HEK293 (cell line): ENCODE measurements at regions of chr5 and their contacts with region 1.

Region 1: GRCh38 chr5:170633235-170634081 is 129.6 kb downstream of the KCNIP1 start:
- H3K4me3 ChIP-seq: peak overlapping the region; percentile 31
- H3K27ac ChIP-seq: peak overlapping the region; percentile 67
- H3K4me1 ChIP-seq: peaks cover 6% of the 10 kb centered on the region
- CTCF ChIP-seq: no peak

Region 2: GRCh38 chr5:170225326-170226128 is 407.9 kb before region 1 on chr5:
- CTCF ChIA-PET with region 1: interaction called, 15 read pairs
- POLR2A ChIA-PET with region 1: no interaction called
- H3K4me3 ChIP-seq: no peak overlapping the region
- H3K27ac ChIP-seq: no peak overlapping the region
- H3K4me1 ChIP-seq: no peaks in the 10 kb centered on the region
- CTCF ChIP-seq: 0 out of 2 replicates have a peak, but pooled peaks have one; percentile 27

Region 3: DNA sequence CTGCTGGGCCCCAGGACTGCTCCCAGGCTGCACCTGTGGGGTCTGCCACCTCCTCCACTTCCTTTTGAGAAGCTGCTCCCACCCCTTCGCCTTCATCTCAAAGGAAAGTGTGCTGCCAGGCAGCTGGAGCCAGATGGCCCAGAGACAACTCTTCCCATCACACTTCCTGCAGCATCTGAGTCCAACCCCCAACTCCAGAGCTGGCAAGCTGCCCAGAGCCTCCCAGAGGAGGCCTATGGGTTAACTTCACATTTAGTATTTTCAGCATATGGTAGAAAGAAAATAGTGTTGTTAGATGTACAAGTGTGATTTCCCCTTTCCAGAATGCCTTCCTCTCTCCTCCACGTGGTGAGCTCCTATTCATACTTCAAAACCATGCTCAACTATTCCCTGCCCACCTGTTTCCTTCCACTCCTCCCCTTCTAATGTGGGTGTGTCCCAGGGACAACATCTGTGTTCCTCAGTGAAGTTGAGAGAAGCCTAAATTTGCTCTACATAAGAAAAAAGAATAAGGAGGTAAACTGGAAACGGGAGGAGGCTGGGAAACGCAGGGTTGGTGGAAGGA is 205.7 kb before region 1 on chr5:
- CTCF ChIA-PET with region 1: interaction called, 47 read pairs
- POLR2A ChIA-PET with region 1: no interaction called
- H3K4me3 ChIP-seq: no peak overlapping the region
- H3K27ac ChIP-seq: no peak overlapping the region
- H3K4me1 ChIP-seq: 0 out of 2 replicates have a peak, but pooled peaks cover 4% of the 10 kb centered on the region
- CTCF ChIP-seq: no peak

Region 4: DNA sequence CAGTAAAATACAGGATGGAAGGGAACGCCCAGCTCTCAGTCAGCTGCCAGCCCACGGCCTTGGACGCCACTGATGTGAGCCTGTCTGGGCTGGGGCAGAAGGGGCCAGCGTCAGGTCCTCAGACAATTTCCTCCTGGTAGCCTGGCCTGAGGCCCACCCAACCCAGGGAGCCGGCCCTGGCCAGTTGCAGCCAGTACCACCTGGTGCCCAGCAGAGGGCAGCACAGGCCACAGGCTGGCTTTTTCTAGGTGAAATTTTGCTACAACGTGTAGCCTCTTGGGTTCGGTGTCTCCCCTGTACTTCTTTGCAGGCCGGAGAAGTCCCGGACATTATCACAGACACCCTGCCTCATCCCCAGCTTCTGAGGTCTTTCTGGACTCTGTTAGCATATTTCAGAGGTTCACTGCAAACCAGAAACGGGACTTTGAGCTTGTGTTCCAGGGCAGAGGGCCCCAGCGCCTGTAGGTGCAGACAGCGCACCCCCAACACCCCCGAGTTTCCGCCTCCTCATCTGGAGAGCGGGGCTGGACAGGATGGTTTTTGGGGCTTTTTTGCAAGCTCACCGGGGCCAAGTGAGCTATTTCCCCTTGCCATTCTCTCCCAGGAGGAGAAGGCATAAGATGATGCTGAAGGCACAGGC is 198.4 kb before region 1 on chr5:
- CTCF ChIA-PET with region 1: interaction called, 47 read pairs
- POLR2A ChIA-PET with region 1: no interaction called
- H3K4me3 ChIP-seq: no peak overlapping the region
- H3K27ac ChIP-seq: no peak overlapping the region
- H3K4me1 ChIP-seq: no peaks in the 10 kb centered on the region
- CTCF ChIP-seq: peak; percentile 82

Region 5: GRCh38 chr5:170603578-170604565 is 29.6 kb before region 1 on chr5:
- CTCF ChIA-PET with region 1: interaction called, 11 read pairs
- POLR2A ChIA-PET with region 1: interaction called, 4 read pairs
- H3K4me3 ChIP-seq: no peak overlapping the region
- H3K27ac ChIP-seq: no peak overlapping the region
- H3K4me1 ChIP-seq: no peaks in the 10 kb centered on the region
- CTCF ChIP-seq: peak; percentile 67; the same call in 1 of the 2 replicates

Region 6: GRCh38 chr5:170614720-170615119 is 18.7 kb before region 1 on chr5:
- CTCF ChIA-PET with region 1: interaction called, 16 read pairs
- POLR2A ChIA-PET with region 1: no interaction called
- H3K4me3 ChIP-seq: no peak overlapping the region
- H3K27ac ChIP-seq: no peak overlapping the region
- H3K4me1 ChIP-seq: no peaks in the 10 kb centered on the region
- CTCF ChIP-seq: no peak

Region 7: GRCh38 chr5:170791325-170791954 is 158.0 kb after region 1 on chr5:
- CTCF ChIA-PET with region 1: interaction called, 74 read pairs
- POLR2A ChIA-PET with region 1: no interaction called
- H3K4me3 ChIP-seq: no peak overlapping the region
- H3K27ac ChIP-seq: no peak overlapping the region
- H3K4me1 ChIP-seq: no peaks in the 10 kb centered on the region
- CTCF ChIP-seq: peak; percentile 69